ENCODE measurements at regions of chr9 and their contacts with region 1.

Region 1: GRCh38 chr9:26054600-26055520 is 376.6 kb upstream of the TUSC1 start:
- DNase-seq: no peak
- H3K4me3 ChIP-seq: no peak overlapping the region
- H3K4me3 Mint-ChIP-seq: no peak overlapping the region
- H3K27ac ChIP-seq: no peak overlapping the region
- H3K27ac Mint-ChIP-seq: no peak overlapping the region
- H3K4me1 ChIP-seq: no peaks in the 10 kb centered on the region
- H3K4me1 Mint-ChIP-seq: no peaks in the 10 kb centered on the region
- H3K27me3 ChIP-seq: no peaks in the 10 kb centered on the region
- H3K27me3 Mint-ChIP-seq: no peaks in the 10 kb centered on the region
- CTCF ChIP-seq: no peak

Region 2: GRCh38 chr9:25954209-25954608 is 100.7 kb before region 1 on chr9:
- intact Hi-C with region 1: no loop called
- DNase-seq: no peak
- H3K4me3 ChIP-seq: no peak overlapping the region
- H3K4me3 Mint-ChIP-seq: no peak overlapping the region
- H3K27ac ChIP-seq: no peak overlapping the region
- H3K27ac Mint-ChIP-seq: no peak overlapping the region
- H3K4me1 ChIP-seq: no peaks in the 10 kb centered on the region
- H3K4me1 Mint-ChIP-seq: no peaks in the 10 kb centered on the region
- H3K27me3 ChIP-seq: no peaks in the 10 kb centered on the region
- H3K27me3 Mint-ChIP-seq: peaks cover 0 to 3% (median 0%) of the 10 kb centered on the region in 3 donors
- CTCF ChIP-seq: no peak

Region 3: GRCh38 chr9:25994605-25995004 is 60.3 kb before region 1 on chr9:
- intact Hi-C with region 1: loop called in 1 of 2 experiments (anchors 10 kb)
- DNase-seq: no peak
- H3K4me3 ChIP-seq: no peak overlapping the region
- H3K4me3 Mint-ChIP-seq: no peak overlapping the region
- H3K27ac ChIP-seq: no peak overlapping the region
- H3K27ac Mint-ChIP-seq: no peak overlapping the region
- H3K4me1 ChIP-seq: no peaks in the 10 kb centered on the region
- H3K4me1 Mint-ChIP-seq: no peaks in the 10 kb centered on the region
- H3K27me3 ChIP-seq: no peaks in the 10 kb centered on the region
- H3K27me3 Mint-ChIP-seq: peaks cover 0 to 1% (median 0%) of the 10 kb centered on the region in 3 donors
- CTCF ChIP-seq: no peak